OCI-LY7 (cell line): ENCODE measurements at regions of chr19 and their contacts with region 1.

Region 1: DNA sequence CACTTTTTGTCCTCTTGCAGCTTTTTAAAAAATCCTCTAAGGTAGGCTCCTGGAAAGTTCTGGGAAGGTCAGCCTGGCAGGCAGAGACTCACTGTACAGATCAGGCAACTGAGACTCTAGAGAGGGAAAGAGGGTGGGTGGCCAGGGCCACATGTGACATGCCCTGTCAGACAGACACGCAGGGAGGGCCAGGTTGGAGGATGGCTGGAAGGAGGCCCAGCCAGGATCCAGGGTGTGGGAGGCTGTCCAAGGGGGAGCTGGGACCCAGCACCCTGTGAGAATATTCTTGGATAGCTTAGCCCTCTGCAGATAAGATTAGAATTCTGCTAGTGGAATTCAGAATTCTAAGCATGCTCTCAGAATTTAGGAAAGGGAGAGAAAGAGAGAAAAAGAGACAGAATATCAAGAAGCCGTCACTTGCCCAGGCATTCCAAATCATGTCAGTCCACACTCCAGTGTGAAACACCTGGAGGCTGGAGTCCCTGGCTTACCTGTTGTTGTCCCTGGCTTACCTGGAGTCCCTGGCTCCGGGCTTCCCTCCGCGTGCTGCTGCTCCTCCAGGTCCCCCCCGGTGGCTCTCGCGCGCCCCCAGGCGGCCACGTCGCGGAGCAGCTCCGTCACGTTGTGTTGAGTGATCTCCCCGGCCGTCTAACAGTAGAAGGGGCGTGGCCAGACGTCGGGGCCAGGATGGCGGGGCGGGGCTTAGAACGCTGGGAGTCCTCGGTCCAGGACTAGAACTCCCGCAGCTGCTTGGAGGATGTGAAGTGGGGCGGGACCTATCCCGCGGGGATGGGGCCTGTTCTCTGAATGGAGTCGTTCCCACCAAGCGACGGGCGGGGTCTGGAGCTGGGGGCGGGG is 2.8 kb upstream of the TNNI3 start:
- DNase-seq: peak; percentile 95
- H3K4me3 ChIP-seq: peak overlapping the region; percentile 22
- H3K27ac ChIP-seq: no peak overlapping the region
- H3K4me1 ChIP-seq: peaks cover 5% of the 10 kb centered on the region
- CTCF ChIP-seq: peak; percentile 98

Region 2: GRCh38 chr19:54882758-54883157 is 277.6 kb before region 1 on chr19:
- CTCF ChIA-PET with region 1: no interaction called
- POLR2A ChIA-PET with region 1: no interaction called
- intact Hi-C with region 1: loop called (anchors 5 kb)
- DNase-seq: peak; percentile 76
- H3K4me3 ChIP-seq: no peak overlapping the region
- H3K27ac ChIP-seq: no peak overlapping the region
- H3K4me1 ChIP-seq: peaks cover 6% of the 10 kb centered on the region
- CTCF ChIP-seq: peak; percentile 71

Region 3: GRCh38 chr19:55088543-55089341 is 71.6 kb before region 1 on chr19:
- CTCF ChIA-PET with region 1: interaction called, 10 read pairs
- POLR2A ChIA-PET with region 1: no interaction called
- intact Hi-C with region 1: loop called (anchors 1 kb)
- DNase-seq: peak; percentile 73
- H3K4me3 ChIP-seq: no peak overlapping the region
- H3K27ac ChIP-seq: no peak overlapping the region
- H3K4me1 ChIP-seq: no peaks in the 10 kb centered on the region
- CTCF ChIP-seq: peak; percentile 75

Region 4: GRCh38 chr19:55141696-55142095 is 18.7 kb before region 1 on chr19:
- CTCF ChIA-PET with region 1: no interaction called
- POLR2A ChIA-PET with region 1: no interaction called
- intact Hi-C with region 1: loop called (anchors 1 kb)
- DNase-seq: no peak
- H3K4me3 ChIP-seq: no peak overlapping the region
- H3K27ac ChIP-seq: no peak overlapping the region
- H3K4me1 ChIP-seq: peaks cover 23% of the 10 kb centered on the region
- CTCF ChIP-seq: no peak